ENCODE measurements at regions of chr6 and their contacts with region 1.

Region 1: GRCh38 chr6:92428443-92428842 is 990.9 kb downstream of the EPHA7 start:
- DNase-seq: peak; percentile 26
- ATAC-seq: peak; percentile 73
- H3K4me3 ChIP-seq: no peak overlapping the region
- H3K27ac ChIP-seq: no peak overlapping the region
- H3K4me1 ChIP-seq: no peaks in the 10 kb centered on the region
- H3K27me3 ChIP-seq: no peaks in the 10 kb centered on the region
- CTCF ChIP-seq: no peak

Region 2: DNA sequence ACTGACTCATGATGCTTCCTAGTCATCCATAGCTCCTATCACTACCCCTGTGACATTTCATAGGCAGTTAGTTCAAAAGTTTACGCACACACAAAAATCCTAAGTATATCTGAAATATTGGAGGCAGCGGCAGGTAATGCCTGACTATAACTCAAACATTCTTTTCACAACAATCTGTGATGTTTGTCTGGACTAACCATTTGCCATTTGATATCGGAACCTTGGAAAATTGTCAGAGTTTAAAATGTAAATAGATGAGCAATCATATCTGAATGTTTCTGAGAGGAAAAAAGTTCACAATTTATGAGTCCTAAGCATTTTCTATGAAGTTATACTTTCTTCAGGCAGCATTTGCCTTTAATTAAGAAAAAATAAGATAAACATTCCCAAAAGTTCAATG is 87.2 kb before region 1 on chr6:
- CTCF ChIA-PET with region 1: no interaction called
- POLR2A ChIA-PET with region 1: no interaction called
- intact Hi-C with region 1: loop called (anchors 5 kb)
- DNase-seq: peak; percentile 67
- ATAC-seq: peak; percentile 54
- H3K4me3 ChIP-seq: no peak overlapping the region
- H3K27ac ChIP-seq: no peak overlapping the region
- H3K4me1 ChIP-seq: peaks cover 22% of the 10 kb centered on the region; the same call in 1 of the 2 replicates
- H3K27me3 ChIP-seq: no peaks in the 10 kb centered on the region
- CTCF ChIP-seq: no peak

Region 3: GRCh38 chr6:92559002-92559401 is 130.6 kb after region 1 on chr6:
- CTCF ChIA-PET with region 1: no interaction called
- POLR2A ChIA-PET with region 1: no interaction called
- intact Hi-C with region 1: no loop called
- DNase-seq: no peak
- ATAC-seq: no peak
- H3K4me3 ChIP-seq: no peak overlapping the region
- H3K27ac ChIP-seq: no peak overlapping the region
- H3K4me1 ChIP-seq: no peaks in the 10 kb centered on the region
- H3K27me3 ChIP-seq: no peaks in the 10 kb centered on the region
- CTCF ChIP-seq: no peak

Region 4: DNA sequence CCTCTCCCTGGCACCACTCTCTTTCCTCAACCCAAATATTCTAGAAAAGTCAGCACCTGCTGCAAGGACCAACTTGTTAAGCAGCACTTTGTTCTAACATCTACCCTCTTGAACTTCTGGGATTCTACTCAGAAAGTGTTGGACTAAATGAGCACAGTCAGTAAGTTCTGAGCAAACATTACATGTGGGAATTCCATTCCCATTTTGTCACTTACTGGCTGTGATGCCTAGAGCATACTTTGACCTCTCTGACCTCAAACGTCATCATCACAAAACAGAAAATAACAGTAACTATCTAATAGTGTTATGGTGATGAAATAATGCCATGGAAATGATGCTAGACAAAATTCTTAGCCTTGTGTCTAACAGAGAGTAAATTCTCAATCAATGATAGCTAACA is 161.5 kb after region 1 on chr6:
- CTCF ChIA-PET with region 1: no interaction called
- POLR2A ChIA-PET with region 1: no interaction called
- intact Hi-C with region 1: loop called (anchors 2 kb)
- DNase-seq: peak; percentile 9
- ATAC-seq: no peak
- H3K4me3 ChIP-seq: no peak overlapping the region
- H3K27ac ChIP-seq: no peak overlapping the region
- H3K4me1 ChIP-seq: peaks cover 14% of the 10 kb centered on the region; the same call in 1 of the 2 replicates
- H3K27me3 ChIP-seq: no peaks in the 10 kb centered on the region
- CTCF ChIP-seq: no peak

Measured in PC-3 (cell line).